HepG2 (cell line): ENCODE measurements at regions of chr11 and their contacts with region 1.

Region 1: DNA sequence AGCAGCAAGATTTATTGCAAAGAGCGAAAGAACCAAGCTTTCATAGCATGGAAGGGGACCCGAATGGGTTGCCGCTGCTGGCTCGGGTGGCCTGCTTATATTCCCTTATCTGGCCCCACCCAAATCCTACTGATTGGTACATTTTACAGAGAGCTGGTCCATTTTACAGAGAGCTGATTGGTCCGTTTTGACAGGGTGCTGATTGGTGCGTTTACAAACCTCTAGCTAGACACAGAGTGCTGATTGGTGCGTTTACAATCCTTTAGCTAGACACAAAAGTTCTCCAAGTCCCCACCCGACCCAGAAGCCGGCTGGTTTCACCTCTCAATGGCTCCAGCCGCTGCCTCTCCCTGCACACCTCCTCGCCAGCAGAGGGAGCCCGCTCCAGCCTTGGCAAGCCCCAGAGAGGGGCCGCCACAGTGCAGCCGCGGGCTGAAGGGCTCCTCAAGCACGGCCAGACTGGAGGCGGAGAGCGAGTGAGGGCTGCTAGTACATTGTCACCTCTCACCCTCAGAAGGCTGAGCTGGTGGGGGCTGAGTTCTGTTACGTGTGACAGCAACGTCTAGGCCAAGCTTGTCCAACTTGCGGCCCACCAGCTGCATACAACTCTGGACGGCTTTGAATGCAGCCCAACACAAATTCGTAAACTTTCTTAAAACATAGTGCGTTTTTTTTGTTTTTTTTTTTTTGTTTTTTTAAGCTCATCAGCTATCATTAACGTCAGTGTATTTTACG is 8.7 kb downstream of the PTH start:
- DNase-seq: peak; percentile 73
- ATAC-seq: peak; percentile 100
- H3K4me3 ChIP-seq: peak overlapping the region; percentile 27 to 79 (median 69); a peak in 5 of 6 replicates
- H3K27ac ChIP-seq: no peak overlapping the region
- H3K4me1 ChIP-seq: peaks cover 10% of the 10 kb centered on the region; the same call in 1 of the 2 replicates
- H3K27me3 ChIP-seq: no peaks in the 10 kb centered on the region; a peak in 2 of 5 replicates
- CTCF ChIP-seq: peak; percentile 92
- EP300 ChIP-seq: no peak
- POLR2A ChIP-seq: peak in 1 of 2 experiments; percentile 38; a peak in 1 of 4 replicates
- RAD21 ChIP-seq: peak; percentile 48

Region 2: GRCh38 chr11:13229711-13230318 is 257.3 kb before region 1 on chr11:
- CTCF ChIA-PET with region 1: no interaction called
- POLR2A ChIA-PET with region 1: no interaction called
- in situ Hi-C with region 1: no loop called
- intact Hi-C with region 1: no loop called
- DNase-seq: no peak
- ATAC-seq: no peak
- H3K4me3 ChIP-seq: no peak overlapping the region
- H3K27ac ChIP-seq: no peak overlapping the region
- H3K4me1 ChIP-seq: no peaks in the 10 kb centered on the region
- H3K27me3 ChIP-seq: peaks cover 2 to 8% of the 10 kb centered on the region in 2 experiments; a peak in 4 of 5 replicates
- CTCF ChIP-seq: no peak
- EP300 ChIP-seq: no peak
- POLR2A ChIP-seq: no peak
- RAD21 ChIP-seq: no peak

Region 3: DNA sequence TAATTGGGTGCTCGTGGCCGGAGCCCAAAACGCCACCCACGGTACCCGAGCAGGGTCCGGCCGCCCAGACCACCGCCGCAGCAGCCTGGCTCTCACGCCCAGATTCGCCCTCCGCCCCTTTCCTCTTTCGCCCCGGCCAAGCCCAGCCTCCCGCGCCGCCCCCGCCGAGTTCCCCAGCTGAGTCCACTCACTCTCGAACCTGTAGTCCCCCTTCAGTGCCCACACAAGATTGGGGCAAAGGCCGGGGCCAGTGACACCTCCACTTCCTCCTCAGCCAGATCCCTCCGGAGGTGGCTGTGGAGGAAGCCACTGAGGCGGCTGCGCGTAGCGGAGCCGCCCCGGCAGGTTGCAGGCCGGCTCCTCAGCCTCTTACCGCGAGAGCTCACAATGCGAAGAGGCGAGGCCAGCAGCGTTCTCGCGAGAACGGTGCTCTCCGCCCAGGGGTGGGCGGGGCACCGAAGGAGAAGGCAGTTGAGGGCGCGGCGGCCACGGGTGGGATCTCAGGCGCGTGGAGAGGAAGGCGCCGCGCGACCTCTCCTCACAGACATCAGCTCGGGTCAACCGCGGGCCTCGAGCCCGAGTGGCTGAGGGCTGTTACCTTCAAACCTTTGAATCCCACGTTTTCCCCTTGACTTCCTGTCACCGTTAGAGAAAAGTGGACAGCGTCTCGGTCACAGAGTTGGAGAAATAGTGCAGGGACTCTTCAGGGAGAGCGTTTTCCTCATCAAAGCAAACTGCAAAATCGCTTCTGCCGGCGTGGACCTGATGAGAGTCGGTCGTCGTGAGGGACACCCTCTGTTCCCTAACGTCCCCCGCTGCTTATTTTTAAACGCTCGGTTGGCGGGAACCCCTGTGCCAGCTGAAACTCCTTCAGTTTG is 24.0 kb before region 1 on chr11 and contains the start of gene BTBD10:
- CTCF ChIA-PET with region 1: no interaction called
- POLR2A ChIA-PET with region 1: interaction called, 12 read pairs
- in situ Hi-C with region 1: no loop called
- intact Hi-C with region 1: loop called (anchors 1 kb)
- DNase-seq: peak; percentile 89
- ATAC-seq: peak; percentile 99
- H3K4me3 ChIP-seq: peak within 1 kb of the TSS; percentile 82 to 88 (median 84)
- H3K27ac ChIP-seq: peak within 1 kb of the TSS; percentile 75
- H3K4me1 ChIP-seq: peaks cover 23% of the 10 kb centered on the region
- H3K27me3 ChIP-seq: no peaks in the 10 kb centered on the region; a peak in 1 of 5 replicates
- CTCF ChIP-seq: no peak
- EP300 ChIP-seq: no peak
- POLR2A ChIP-seq: peak; percentile 88 to 98
- RAD21 ChIP-seq: no peak
- total RNA-seq, gene BTBD10: 26.6 and 37.0 TPM in 2 replicates

Region 4: GRCh38 chr11:13535819-13536218 is 48.7 kb after region 1 on chr11:
- CTCF ChIA-PET with region 1: no interaction called
- POLR2A ChIA-PET with region 1: no interaction called
- in situ Hi-C with region 1: no loop called
- intact Hi-C with region 1: loop called (anchors 1 kb)
- DNase-seq: peak; percentile 6
- ATAC-seq: no peak
- H3K4me3 ChIP-seq: no peak overlapping the region
- H3K27ac ChIP-seq: no peak overlapping the region
- H3K4me1 ChIP-seq: no peaks in the 10 kb centered on the region
- H3K27me3 ChIP-seq: no peaks in the 10 kb centered on the region
- CTCF ChIP-seq: no peak
- EP300 ChIP-seq: no peak
- POLR2A ChIP-seq: no peak
- RAD21 ChIP-seq: no peak

Region 5: DNA sequence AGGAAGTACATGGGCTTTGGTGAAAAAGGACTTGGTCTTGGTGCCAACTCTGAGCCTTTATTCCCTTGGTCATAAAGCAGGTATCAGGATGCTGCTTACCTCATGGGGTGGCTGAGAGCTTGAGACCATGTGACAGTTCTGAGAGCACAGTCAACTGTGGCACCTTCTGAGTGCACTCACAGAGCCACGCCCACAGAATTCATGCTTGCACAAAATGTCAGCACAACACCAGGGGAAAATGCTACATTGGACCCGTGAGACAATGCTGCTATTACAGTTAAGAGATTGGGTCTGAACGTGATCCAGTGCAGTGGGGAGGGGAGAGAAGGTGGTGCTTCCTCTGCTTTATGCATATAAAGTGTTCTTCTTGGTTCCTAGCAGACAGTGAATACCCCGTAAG is 395.9 kb after region 1 on chr11:
- CTCF ChIA-PET with region 1: no interaction called
- POLR2A ChIA-PET with region 1: no interaction called
- in situ Hi-C with region 1: no loop called
- intact Hi-C with region 1: no loop called
- DNase-seq: no peak
- ATAC-seq: no peak
- H3K4me3 ChIP-seq: no peak overlapping the region
- H3K27ac ChIP-seq: no peak overlapping the region
- H3K4me1 ChIP-seq: no peaks in the 10 kb centered on the region
- H3K27me3 ChIP-seq: no peaks in the 10 kb centered on the region; a peak in 1 of 5 replicates
- CTCF ChIP-seq: no peak
- EP300 ChIP-seq: no peak
- POLR2A ChIP-seq: no peak
- RAD21 ChIP-seq: no peak